Psoas muscle (tissue), 8 donors: ENCODE measurements at regions of chr6 and their contacts with region 1.

Region 1: GRCh38 chr6:106339334-106340029 is 13.9 kb upstream of the ATG5 start:
- DNase-seq: no peak
- ATAC-seq: peak; percentile 48 to 84 (median 80)
- H3K4me3 ChIP-seq: no peak overlapping the region
- H3K27ac ChIP-seq: no peak overlapping the region
- H3K4me1 ChIP-seq: no peaks in the 10 kb centered on the region
- H3K27me3 ChIP-seq: peaks cover 0 to 3% (median 0%) of the 10 kb centered on the region in 3 donors
- CTCF ChIP-seq: peak; percentile 48

Region 2: DNA sequence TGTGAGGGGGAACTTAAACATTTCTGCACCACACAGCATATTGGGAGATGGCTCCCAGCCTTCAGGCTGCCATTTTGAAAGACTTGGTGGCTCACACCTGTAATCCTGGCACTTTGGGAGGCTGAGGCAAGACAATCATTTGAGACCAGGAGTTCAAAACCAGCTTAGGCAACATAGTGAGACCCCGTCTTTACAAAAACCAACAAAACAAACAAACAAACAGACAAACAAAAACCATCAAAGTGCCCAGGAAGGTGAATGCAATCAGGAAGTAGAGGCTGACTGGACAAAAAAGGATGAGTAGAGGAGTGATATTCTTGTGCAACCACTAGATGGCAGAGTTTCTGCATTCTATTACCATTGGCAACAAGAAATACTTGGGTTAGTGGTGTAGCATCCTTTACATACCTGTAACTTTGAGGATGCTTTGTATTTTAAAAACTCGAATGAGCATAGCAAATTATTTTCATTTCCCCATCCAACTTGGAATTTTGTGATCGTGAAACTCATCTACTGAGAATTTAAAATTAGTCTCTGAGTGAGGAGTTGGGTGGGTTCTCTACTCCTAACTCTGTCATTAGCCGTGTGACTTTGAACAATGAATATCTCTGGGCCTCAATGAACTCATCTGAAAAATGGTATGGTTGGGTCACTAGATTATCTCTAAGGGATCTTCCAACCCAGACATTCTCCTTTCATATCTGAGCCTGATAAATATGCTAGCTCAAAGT is 105.5 kb after region 1 on chr6:
- intact Hi-C with region 1: loop called in 1 of 2 experiments (anchors 5 kb)
- DNase-seq: no peak
- ATAC-seq: peak; percentile 68 to 86 (median 75)
- H3K4me3 ChIP-seq: no peak overlapping the region
- H3K27ac ChIP-seq: no peak overlapping the region
- H3K4me1 ChIP-seq: no peaks in the 10 kb centered on the region
- H3K27me3 ChIP-seq: peaks cover 0 to 25% (median 10%) of the 10 kb centered on the region in 3 donors
- CTCF ChIP-seq: peak; percentile 77

Region 3: DNA sequence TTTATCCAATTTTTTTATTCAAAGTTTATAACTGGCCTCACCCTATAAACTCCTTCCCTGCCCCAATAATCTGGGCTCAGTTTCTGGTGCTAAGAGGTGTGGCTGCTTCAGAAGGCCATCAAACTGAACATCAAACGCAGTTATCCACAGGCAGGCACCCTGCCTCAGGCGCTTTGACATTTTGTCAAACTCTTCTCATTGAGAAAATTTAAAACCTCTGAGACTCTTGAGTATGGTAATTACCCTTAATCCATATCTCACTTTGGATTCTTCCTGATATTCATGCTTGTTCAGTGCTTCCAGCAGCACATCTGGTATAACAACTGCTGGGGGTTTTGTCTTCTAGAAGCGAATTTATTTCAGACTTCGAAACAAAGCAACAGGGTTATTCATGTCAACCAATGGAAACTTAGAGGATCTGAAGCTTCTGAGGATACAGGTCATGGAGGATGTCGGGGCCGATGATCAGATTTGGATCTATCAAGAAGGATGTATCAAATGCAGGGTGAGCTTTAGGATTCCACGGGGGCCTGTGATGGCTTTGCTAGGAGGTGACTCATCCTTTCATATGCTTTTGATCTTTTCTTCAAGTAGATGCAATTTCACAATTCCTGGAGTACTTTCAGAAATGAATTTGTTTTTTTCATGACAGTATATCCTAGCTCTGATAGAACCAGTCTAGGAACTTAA is 221.7 kb after region 1 on chr6:
- intact Hi-C with region 1: loop called (anchors 5 to 10 kb)
- DNase-seq: no peak
- ATAC-seq: no peak
- H3K4me3 ChIP-seq: no peak overlapping the region
- H3K27ac ChIP-seq: no peak overlapping the region
- H3K4me1 ChIP-seq: no peaks in the 10 kb centered on the region
- H3K27me3 ChIP-seq: no peaks in the 10 kb centered on the region
- CTCF ChIP-seq: no peak

Region 4: DNA sequence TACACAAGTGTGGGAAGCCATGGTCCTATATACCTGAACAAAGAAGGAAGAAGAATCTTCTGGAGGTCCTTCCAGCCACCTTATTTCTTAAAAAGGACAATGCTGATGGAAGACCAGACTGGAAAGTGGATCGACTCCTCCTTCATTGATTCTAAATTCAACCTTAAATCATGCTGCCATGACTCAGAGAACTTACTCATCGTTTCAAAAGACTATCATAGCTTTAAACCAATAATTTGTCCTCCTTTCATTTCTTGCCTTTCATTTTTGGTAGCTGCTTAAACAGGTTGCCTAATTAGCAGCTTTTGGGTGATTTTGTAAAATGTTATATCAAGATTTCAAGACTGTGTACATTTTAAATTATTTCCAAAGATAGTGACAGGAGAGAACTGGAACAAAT is 229.0 kb after region 1 on chr6:
- intact Hi-C with region 1: loop called (anchors 5 to 10 kb)
- DNase-seq: no peak
- ATAC-seq: no peak
- H3K4me3 ChIP-seq: no peak overlapping the region
- H3K27ac ChIP-seq: no peak overlapping the region
- H3K4me1 ChIP-seq: no peaks in the 10 kb centered on the region
- H3K27me3 ChIP-seq: no peaks in the 10 kb centered on the region
- CTCF ChIP-seq: no peak

Region 5: GRCh38 chr6:106979427-106979884 is 640.0 kb after region 1 on chr6:
- intact Hi-C with region 1: loop called in 1 of 2 experiments (anchors 5 kb)
- DNase-seq: peak; percentile 85 to 91
- ATAC-seq: peak; percentile 87 to 94 (median 89)
- H3K4me3 ChIP-seq: no peak overlapping the region
- H3K27ac ChIP-seq: no peak overlapping the region
- H3K4me1 ChIP-seq: peaks cover under 1% of the 10 kb centered on the region
- H3K27me3 ChIP-seq: peaks cover 0 to 49% (median 5%) of the 10 kb centered on the region in 3 donors
- CTCF ChIP-seq: peak; percentile 93